ENCODE measurements at regions of chr1 and their contacts with region 1.

Region 1: DNA sequence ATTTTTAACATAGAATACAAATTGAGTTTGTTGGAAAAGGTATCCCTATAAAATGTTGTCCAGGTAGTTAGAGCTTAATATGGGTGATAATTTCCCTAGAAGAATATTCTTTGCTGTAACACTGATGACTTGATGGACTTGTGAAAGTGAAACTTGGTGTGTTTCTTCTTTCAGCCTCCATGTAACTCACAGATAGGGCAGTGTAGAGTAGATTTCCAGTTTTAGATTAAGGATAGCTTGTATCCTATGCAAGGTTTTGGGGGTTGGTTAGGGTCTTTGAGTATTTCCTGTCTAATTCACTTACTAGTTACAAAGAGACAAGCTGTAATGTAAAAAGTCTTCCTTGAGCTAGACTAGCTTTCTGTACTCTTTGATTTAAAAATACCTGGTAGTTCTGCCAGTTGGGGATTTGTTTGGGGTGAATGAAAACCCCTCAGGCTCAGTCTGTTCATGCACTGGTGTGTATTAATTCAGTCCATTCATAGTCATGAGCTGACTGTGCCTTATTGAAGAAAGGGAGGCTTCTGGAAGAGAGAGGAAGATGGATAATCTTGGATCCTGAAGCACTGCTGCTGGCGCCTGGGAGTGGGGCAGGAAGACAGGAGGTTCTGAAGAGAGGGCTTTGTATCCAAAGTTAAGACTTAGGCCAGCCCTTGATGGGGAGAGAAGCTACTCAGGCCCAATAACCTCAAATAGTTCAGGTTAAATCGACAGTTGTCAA is 83.6 kb downstream of the CAMTA1 start:
- DNase-seq: no peak
- H3K4me3 Mint-ChIP-seq: peak overlapping the region; percentile 63
- H3K27ac Mint-ChIP-seq: peak overlapping the region; percentile 95
- H3K4me1 Mint-ChIP-seq: peaks cover 55% of the 10 kb centered on the region
- H3K27me3 Mint-ChIP-seq: no peaks in the 10 kb centered on the region
- CTCF ChIP-seq: no peak

Region 2: GRCh38 chr1:6041432-6042062 is 827.3 kb before region 1 on chr1:
- CTCF ChIA-PET with region 1: no interaction called
- POLR2A ChIA-PET with region 1: no interaction called
- intact Hi-C with region 1: no loop called
- DNase-seq: peak; percentile 27
- H3K4me3 Mint-ChIP-seq: no peak overlapping the region
- H3K27ac Mint-ChIP-seq: no peak overlapping the region
- H3K4me1 Mint-ChIP-seq: no peaks in the 10 kb centered on the region
- H3K27me3 Mint-ChIP-seq: no peaks in the 10 kb centered on the region
- CTCF ChIP-seq: peak; percentile 32

Region 3: DNA sequence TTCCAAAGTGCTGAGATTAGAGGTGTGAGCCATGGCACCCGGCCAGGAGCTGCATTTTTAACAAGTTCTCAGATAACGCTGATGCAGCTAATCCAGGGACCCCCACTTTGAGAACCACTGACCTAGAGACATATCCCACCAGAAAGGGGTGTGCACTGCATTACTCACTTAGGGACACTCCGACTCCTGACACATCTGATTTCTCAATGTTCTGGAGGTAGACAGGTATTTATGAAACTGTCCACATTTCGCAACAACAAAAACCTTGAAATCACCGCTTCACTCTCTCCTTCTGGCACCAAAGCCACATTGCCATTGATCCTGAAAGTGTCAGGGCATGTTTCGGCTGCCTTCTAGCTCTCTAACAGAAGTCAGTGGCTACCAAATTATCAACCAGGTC is 106.8 kb before region 1 on chr1:
- CTCF ChIA-PET with region 1: no interaction called
- POLR2A ChIA-PET with region 1: interaction called, 13 read pairs
- intact Hi-C with region 1: no loop called
- DNase-seq: peak; percentile 91
- H3K4me3 Mint-ChIP-seq: peak overlapping the region; percentile 43
- H3K27ac Mint-ChIP-seq: peak overlapping the region; percentile 72
- H3K4me1 Mint-ChIP-seq: peaks cover 14% of the 10 kb centered on the region
- H3K27me3 Mint-ChIP-seq: no peaks in the 10 kb centered on the region
- CTCF ChIP-seq: no peak

Region 4: GRCh38 chr1:6880951-6881690 is 12.3 kb after region 1 on chr1:
- CTCF ChIA-PET with region 1: interaction called, 5 read pairs
- POLR2A ChIA-PET with region 1: interaction called, 37 read pairs
- intact Hi-C with region 1: no loop called
- DNase-seq: peak; percentile 78
- H3K4me3 Mint-ChIP-seq: peak overlapping the region; percentile 26
- H3K27ac Mint-ChIP-seq: no peak overlapping the region
- H3K4me1 Mint-ChIP-seq: peaks cover 8% of the 10 kb centered on the region
- H3K27me3 Mint-ChIP-seq: no peaks in the 10 kb centered on the region
- CTCF ChIP-seq: no peak

Measured in MCF 10A (cell line).